Activated CD4-positive, alpha-beta memory T cell treated with anti-CD3 and anti-CD28 coated beads, Interleukin-2, amount 10 ng/mL, durations not matched to agents 7 days and 5 days (primary cell): ENCODE measurements at regions of chr15 and their contacts with region 1.

Region 1: GRCh38 chr15:50119063-50120040 is at the start of gene ATP8B4:
- DNase-seq: peak; percentile 62
- H3K4me3 Mint-ChIP-seq: peak within 1 kb of the TSS; percentile 84
- H3K27ac Mint-ChIP-seq: peak within 1 kb of the TSS; percentile 88
- H3K4me1 Mint-ChIP-seq: peaks cover 54% of the 10 kb centered on the region
- H3K27me3 Mint-ChIP-seq: peaks cover 2% of the 10 kb centered on the region
- total RNA-seq, gene ATP8B4: 19.9 to 20.7 TPM

Region 2: DNA sequence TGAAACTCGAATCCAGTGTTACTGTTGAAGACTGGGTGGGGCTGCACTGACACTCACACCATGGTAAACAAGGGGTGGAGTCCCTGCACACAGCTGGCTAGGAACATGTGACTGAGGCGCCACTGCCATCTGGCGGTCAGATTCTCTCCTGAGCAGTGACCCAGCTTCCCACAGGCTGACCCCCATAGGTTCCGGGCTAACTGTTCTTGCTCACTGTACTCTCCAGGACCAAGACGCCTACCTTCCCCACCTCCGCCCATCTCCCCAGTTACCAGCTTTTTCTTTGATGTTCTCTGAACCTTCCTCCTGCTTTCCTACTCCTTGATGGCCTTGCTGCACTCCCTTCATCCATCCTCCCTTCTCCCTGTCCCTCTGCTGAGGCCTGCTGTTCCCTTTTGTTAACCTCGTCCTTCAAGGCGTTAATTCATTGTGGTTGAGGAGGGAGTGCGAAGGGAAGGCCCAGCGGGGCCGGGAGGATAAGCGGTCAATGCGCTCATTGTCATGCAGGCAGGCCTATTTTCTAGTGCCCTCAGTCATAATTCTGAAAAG is 115.5 kb before region 1 on chr15:
- CTCF ChIA-PET with region 1: no interaction called
- POLR2A ChIA-PET with region 1: no interaction called
- DNase-seq: peak; percentile 85
- H3K4me3 Mint-ChIP-seq: no peak overlapping the region
- H3K27ac Mint-ChIP-seq: peak overlapping the region; percentile 67
- H3K4me1 Mint-ChIP-seq: peaks cover 17% of the 10 kb centered on the region
- H3K27me3 Mint-ChIP-seq: no peaks in the 10 kb centered on the region

Region 3: DNA sequence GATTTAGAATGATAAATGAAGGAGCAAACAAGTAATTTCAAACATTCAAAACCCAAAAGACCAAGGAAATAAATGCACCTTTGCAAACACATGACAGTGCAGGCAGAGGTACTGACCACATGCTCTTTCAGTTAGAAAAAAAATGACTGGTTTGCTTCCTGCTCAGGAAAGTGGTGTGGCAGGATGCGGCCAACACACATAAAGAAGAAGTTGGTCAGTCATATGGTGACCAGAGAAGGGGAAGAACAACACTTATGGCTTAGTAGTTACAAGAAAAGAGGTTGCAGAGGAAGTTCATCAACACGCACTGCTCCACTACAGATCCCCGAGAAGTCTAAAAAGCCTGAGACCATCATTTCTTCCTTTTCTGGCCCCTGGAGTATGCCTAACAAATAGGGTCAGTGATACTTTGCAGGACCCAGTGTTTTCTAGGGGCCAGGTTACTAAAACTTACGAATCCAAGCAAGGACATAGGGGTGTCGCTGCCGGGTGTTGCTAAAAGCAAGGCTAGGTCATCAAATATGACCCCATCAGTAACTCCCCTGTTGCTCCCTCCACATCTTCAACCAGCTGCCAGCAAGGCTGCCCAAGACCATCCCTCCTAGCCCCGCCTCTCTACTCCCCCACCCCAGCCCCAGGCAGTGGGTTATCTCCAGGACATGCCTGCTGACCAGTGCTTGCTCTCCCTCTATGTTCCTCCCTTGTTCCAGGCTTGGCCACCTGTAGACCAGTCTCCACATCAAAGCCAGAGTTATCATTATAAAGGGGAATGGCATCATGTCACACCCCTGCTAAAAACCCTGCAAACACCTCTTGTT is 11.6 kb before region 1 on chr15:
- CTCF ChIA-PET with region 1: no interaction called
- POLR2A ChIA-PET with region 1: interaction called, 19 read pairs
- DNase-seq: peak; percentile 64
- H3K4me3 Mint-ChIP-seq: peak overlapping the region; percentile 42
- H3K27ac Mint-ChIP-seq: peak overlapping the region; percentile 91
- H3K4me1 Mint-ChIP-seq: peaks cover 89% of the 10 kb centered on the region
- H3K27me3 Mint-ChIP-seq: no peaks in the 10 kb centered on the region

Region 4: DNA sequence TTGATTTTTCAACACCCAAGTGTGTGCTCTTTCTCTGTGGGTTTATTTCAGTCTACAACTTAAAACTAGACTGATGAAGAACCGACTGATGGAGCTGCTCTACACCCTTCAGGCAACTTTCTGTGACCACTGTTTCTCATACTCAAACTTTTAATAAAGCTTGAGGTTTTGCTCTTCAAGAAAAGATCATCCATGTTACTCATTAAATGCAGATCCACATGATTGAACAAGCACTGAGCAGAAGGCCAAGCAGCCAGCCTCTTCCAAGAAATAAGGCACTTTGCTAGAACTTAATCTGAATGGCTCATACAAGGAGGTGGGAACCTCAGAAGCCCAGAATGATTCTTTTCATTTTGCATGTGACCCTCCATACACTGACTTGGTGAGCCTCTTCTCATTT is 71.4 kb after region 1 on chr15:
- CTCF ChIA-PET with region 1: no interaction called
- POLR2A ChIA-PET with region 1: no interaction called
- DNase-seq: no peak
- H3K4me3 Mint-ChIP-seq: no peak overlapping the region
- H3K27ac Mint-ChIP-seq: no peak overlapping the region
- H3K4me1 Mint-ChIP-seq: peaks cover 33% of the 10 kb centered on the region
- H3K27me3 Mint-ChIP-seq: no peaks in the 10 kb centered on the region

Region 5: GRCh38 chr15:50202003-50202770 is 82.8 kb after region 1 on chr15:
- CTCF ChIA-PET with region 1: no interaction called
- POLR2A ChIA-PET with region 1: no interaction called
- DNase-seq: no peak
- H3K4me3 Mint-ChIP-seq: no peak overlapping the region
- H3K27ac Mint-ChIP-seq: no peak overlapping the region
- H3K4me1 Mint-ChIP-seq: no peaks in the 10 kb centered on the region
- H3K27me3 Mint-ChIP-seq: no peaks in the 10 kb centered on the region